Endothelial cell of umbilical vein (primary cell): ENCODE measurements at regions of chr6 and their contacts with region 1.

Region 1: DNA sequence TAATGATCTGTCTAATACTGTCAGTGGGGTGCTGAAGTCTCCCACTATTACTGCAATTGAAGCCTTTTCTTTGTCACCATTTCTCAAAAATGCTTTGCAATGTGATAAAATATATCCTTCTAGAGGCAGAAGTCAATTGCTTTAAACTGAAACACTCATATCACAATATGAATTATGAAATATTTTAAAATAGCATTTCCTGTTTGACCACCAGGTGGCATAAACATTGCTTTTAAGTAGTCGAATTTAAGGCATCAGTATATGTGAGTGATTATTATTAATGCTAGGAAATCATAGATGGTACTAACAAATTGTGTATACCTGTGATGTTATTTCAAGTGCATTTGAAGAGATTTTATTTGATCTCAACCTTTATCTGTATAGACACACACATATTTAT is 87.5 kb downstream of the MEI4 start:
- DNase-seq: peak; percentile 36
- H3K4me3 ChIP-seq: no peak overlapping the region
- H3K27ac ChIP-seq: no peak overlapping the region
- H3K4me1 ChIP-seq: no peaks in the 10 kb centered on the region
- H3K27me3 ChIP-seq: no peaks in the 10 kb centered on the region
- CTCF ChIP-seq: peak in 1 of 2 donors; percentile 23
- POLR2A ChIP-seq: no peak

Region 2: GRCh38 chr6:76984572-76984971 is 755.8 kb before region 1 on chr6:
- CTCF ChIA-PET with region 1: no interaction called
- POLR2A ChIA-PET with region 1: no interaction called
- dilution Hi-C with region 1: no loop called
- intact Hi-C with region 1: no loop called
- DNase-seq: peak; percentile 8
- H3K4me3 ChIP-seq: no peak overlapping the region
- H3K27ac ChIP-seq: no peak overlapping the region
- H3K4me1 ChIP-seq: no peaks in the 10 kb centered on the region
- H3K27me3 ChIP-seq: no peaks in the 10 kb centered on the region
- CTCF ChIP-seq: no peak
- POLR2A ChIP-seq: no peak

Region 3: GRCh38 chr6:77812304-77812703 is 71.9 kb after region 1 on chr6:
- CTCF ChIA-PET with region 1: no interaction called
- POLR2A ChIA-PET with region 1: no interaction called
- dilution Hi-C with region 1: no loop called
- intact Hi-C with region 1: no loop called
- DNase-seq: no peak
- H3K4me3 ChIP-seq: no peak overlapping the region
- H3K27ac ChIP-seq: no peak overlapping the region
- H3K4me1 ChIP-seq: no peaks in the 10 kb centered on the region
- H3K27me3 ChIP-seq: no peaks in the 10 kb centered on the region
- CTCF ChIP-seq: no peak
- POLR2A ChIP-seq: no peak

Region 4: GRCh38 chr6:77926198-77926752 is 185.9 kb after region 1 on chr6:
- CTCF ChIA-PET with region 1: no interaction called
- POLR2A ChIA-PET with region 1: no interaction called
- dilution Hi-C with region 1: no loop called
- intact Hi-C with region 1: loop called (anchors 1 kb)
- DNase-seq: peak; percentile 6
- H3K4me3 ChIP-seq: no peak overlapping the region
- H3K27ac ChIP-seq: no peak overlapping the region
- H3K4me1 ChIP-seq: no peaks in the 10 kb centered on the region
- H3K27me3 ChIP-seq: no peaks in the 10 kb centered on the region
- CTCF ChIP-seq: peak in 1 of 2 donors; percentile 2
- POLR2A ChIP-seq: no peak

Region 5: GRCh38 chr6:78810146-78810545 is 1069.8 kb after region 1 on chr6:
- CTCF ChIA-PET with region 1: interaction called, 36 read pairs
- POLR2A ChIA-PET with region 1: no interaction called
- dilution Hi-C with region 1: no loop called
- intact Hi-C with region 1: loop called (anchors 1 kb)
- DNase-seq: peak; percentile 60
- H3K4me3 ChIP-seq: no peak overlapping the region
- H3K27ac ChIP-seq: no peak overlapping the region
- H3K4me1 ChIP-seq: no peaks in the 10 kb centered on the region
- H3K27me3 ChIP-seq: peaks cover 0 to 2% of the 10 kb centered on the region in 2 experiments
- CTCF ChIP-seq: peak; percentile 57 to 64
- POLR2A ChIP-seq: no peak